ENCODE measurements at regions of chrX and their contacts with region 1.

Region 1: DNA sequence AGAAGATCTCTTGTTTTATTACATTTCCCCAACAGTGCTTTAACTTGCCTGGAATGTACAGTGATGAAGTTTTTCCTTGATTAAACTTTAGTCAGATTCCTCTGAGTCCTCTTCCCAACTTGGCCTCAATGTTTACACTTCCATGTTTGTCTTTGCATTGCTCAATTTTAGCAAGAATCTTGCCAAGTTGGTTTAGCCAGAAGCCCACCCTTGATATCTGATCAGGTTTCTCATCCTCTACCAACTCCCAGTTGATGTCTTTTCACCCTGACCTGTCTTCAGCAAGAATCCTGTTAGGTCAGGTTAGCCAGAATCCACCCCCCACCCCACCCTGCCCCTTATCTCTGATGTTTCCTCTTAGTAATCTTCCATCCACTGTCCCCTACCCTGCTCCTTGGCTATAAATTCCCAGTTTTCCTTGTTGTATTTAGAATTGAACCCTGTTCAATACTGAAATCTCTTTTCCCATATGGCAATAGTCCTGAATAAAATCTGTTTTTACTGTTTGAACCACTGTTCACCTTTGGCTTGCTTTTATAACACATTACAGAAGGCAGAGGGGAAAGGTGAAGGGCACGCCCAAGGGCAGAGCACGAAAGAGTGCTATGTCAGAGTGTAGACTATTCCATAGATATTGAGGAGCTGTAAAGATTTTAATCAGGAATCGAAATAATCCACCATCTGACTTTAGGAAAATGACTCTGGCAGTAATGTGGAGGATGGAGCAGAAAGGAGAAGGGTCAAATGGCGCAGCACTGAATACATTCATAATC is 120.7 kb downstream of the MBNL3 start:
- DNase-seq: peak; percentile 83
- ATAC-seq: peak; percentile 53
- H3K4me3 ChIP-seq: no peak overlapping the region; a peak in 1 of 6 replicates
- H3K27ac ChIP-seq: peak overlapping the region; percentile 77
- H3K4me1 ChIP-seq: peaks cover 70% of the 10 kb centered on the region
- H3K27me3 ChIP-seq: no peaks in the 10 kb centered on the region
- CTCF ChIP-seq: no peak
- EP300 ChIP-seq: peak in 1 of 2 experiments; percentile 93; a peak in 2 of 4 replicates
- POLR2A ChIP-seq: no peak
- RAD21 ChIP-seq: no peak

Region 2: GRCh38 chrX:132330117-132330729 is 37.9 kb before region 1 on chrX:
- CTCF ChIA-PET with region 1: no interaction called
- POLR2A ChIA-PET with region 1: interaction called, 6 read pairs
- in situ Hi-C with region 1: no loop called
- intact Hi-C with region 1: loop called (anchors 2 kb)
- DNase-seq: peak; percentile 8
- ATAC-seq: peak; percentile 52
- H3K4me3 ChIP-seq: no peak overlapping the region
- H3K27ac ChIP-seq: peak overlapping the region; percentile 61
- H3K4me1 ChIP-seq: peaks cover 58% of the 10 kb centered on the region
- H3K27me3 ChIP-seq: no peaks in the 10 kb centered on the region
- CTCF ChIP-seq: 0 out of 2 replicates have a peak, but pooled peaks have one; percentile 8
- EP300 ChIP-seq: no peak
- POLR2A ChIP-seq: no peak
- RAD21 ChIP-seq: no peak